Activated T-helper 1 cell treated with anti-CD3 and anti-CD28 coated beads, Interleukin-12 subunit alpha, Interleukin-12 subunit beta, Interleukin-2, Interleukin-4 antibody, amounts not matched to agents 30 ng/mL and 10 ng/mL and 1 ng/mL, durations not matched to agents 14 hours and 24 hours and 36 hours (primary cell): ENCODE measurements at regions of chr10 and their contacts with region 1.

Region 1: DNA sequence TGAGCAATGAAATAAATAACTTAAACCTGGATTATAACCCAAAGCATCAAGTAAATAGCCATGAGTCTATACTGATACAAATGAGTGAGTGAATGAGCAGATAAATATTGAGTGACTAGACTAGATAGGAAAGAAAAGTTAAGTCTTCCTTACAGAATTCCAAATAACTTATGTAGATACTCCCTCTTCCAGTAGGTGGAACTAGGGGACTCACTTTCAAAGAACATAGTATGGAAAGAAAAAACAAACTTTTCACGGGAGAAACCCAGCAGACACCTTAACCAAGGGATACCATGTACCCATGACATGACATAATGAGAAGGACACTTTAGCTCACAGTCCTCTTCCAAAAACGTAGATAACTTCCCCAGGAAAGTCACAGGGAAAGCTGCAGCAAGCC is 32.2 kb downstream of the CSGALNACT2 start:
- DNase-seq: no peak
- H3K4me3 Mint-ChIP-seq: no peak overlapping the region
- H3K27ac Mint-ChIP-seq: no peak overlapping the region
- H3K4me1 Mint-ChIP-seq: peaks cover 17% of the 10 kb centered on the region
- H3K27me3 Mint-ChIP-seq: no peaks in the 10 kb centered on the region

Region 2: DNA sequence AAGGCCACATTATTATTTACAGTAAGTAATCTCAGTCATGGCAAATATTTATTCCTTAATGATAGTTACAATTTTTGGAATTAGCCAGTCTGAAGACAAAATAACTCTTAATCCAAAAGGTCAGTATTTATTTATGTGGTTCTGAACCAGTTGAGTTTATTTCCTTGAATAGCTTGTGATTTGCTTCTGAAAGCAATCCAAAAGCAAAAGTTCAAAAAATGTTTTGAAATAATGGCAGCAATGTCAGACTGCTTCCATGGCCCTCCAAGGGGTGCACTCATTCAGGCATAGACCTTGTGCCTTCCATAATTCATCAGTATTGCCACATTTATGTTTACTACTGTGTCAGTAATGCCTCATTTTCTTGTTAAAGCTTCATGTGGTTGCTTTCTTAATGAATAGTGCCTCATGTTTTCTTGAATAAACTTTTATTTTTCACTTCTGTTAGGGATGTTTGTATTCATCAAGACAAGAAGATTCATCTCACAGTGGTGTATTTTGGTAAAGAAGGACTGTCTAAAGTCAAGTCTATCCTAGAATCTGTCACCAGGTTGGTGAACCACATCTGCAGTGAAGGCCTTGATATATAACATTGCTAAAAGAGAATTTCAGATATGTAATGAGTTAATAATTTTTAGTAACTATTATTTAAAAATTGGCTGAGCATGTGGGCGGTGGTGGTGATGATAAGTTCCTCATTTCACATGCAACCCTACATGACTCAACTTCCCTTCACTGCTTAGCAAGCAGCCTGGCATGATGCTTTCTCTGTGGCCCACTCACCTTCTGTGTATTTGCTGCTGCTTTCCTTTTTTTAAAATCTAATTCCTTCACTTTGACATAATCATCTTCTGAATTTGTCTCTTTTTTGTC is 10.2 kb before region 1 on chr10:
- intact Hi-C with region 1: loop called (anchors 1 kb)
- DNase-seq: no peak
- H3K4me3 Mint-ChIP-seq: no peak overlapping the region
- H3K27ac Mint-ChIP-seq: peak overlapping the region; percentile 81
- H3K4me1 Mint-ChIP-seq: peaks cover 63% of the 10 kb centered on the region
- H3K27me3 Mint-ChIP-seq: no peaks in the 10 kb centered on the region